ENCODE measurements at regions of chr11 and their contacts with region 1.

Region 1: GRCh38 chr11:10857709-10858438 is at the start of gene ZBED5:
- DNase-seq: peak; percentile 87 to 98
- ATAC-seq: peak; percentile 96
- H3K4me3 ChIP-seq: peak within 1 kb of the TSS; percentile 91
- H3K27ac ChIP-seq: peak within 1 kb of the TSS; percentile 95 to 98
- H3K4me1 ChIP-seq: peaks cover 36% of the 10 kb centered on the region
- CTCF ChIP-seq: no peak
- EP300 ChIP-seq: no peak
- POLR2A ChIP-seq: peak; percentile 76
- RAD21 ChIP-seq: peak; percentile 12; a peak in 1 of 5 replicates
- polyA plus RNA-seq, gene ZBED5: 132 and 142 TPM in 2 replicates

Region 2: GRCh38 chr11:10526974-10527918 is 330.6 kb before region 1 on chr11:
- CTCF ChIA-PET with region 1: no interaction called
- POLR2A ChIA-PET with region 1: no interaction called
- DNase-seq: peak in 1 of 2 experiments; percentile 42
- ATAC-seq: peak; percentile 86 to 92
- H3K4me3 ChIP-seq: peak overlapping the region; percentile 1; the same call in 1 of the 3 replicates
- H3K27ac ChIP-seq: peak overlapping the region; percentile 60 to 84
- H3K4me1 ChIP-seq: peaks cover 43% of the 10 kb centered on the region
- CTCF ChIP-seq: no peak
- EP300 ChIP-seq: no peak
- POLR2A ChIP-seq: no peak
- RAD21 ChIP-seq: no peak

Region 3: GRCh38 chr11:10818594-10818993 is 39.3 kb before region 1 on chr11:
- CTCF ChIA-PET with region 1: interaction called, 10 read pairs
- POLR2A ChIA-PET with region 1: interaction called, 3 read pairs
- DNase-seq: peak in 1 of 2 experiments; percentile 35
- ATAC-seq: peak; percentile 56 to 85; a peak in 4 of 6 replicates
- H3K4me3 ChIP-seq: no peak overlapping the region
- H3K27ac ChIP-seq: peak overlapping the region in 1 of 2 experiments; percentile 36; a peak in 1 of 6 replicates
- H3K4me1 ChIP-seq: peaks cover 11% of the 10 kb centered on the region; the same call in 2 of the 3 replicates
- CTCF ChIP-seq: no peak
- EP300 ChIP-seq: no peak
- POLR2A ChIP-seq: no peak
- RAD21 ChIP-seq: no peak

Region 4: DNA sequence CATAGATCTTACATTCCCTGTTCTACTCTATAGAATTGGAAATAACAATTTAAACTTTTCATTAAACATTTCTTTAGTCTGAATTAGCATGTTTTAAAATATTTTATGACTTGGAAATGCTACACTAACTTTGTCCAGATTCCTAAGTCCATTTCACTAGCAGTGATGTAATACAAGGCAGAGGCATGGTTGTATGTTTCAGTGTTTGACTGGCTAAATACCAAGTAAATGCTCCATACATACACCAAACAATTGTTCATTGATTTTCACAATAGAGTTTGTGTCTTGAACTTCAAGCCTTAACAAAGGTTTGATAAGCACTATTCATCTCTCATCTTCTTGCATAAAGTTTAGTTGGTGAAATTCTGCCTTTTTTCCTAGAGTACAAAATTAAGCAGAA is 13.5 kb before region 1 on chr11:
- CTCF ChIA-PET with region 1: interaction called, 3 read pairs
- POLR2A ChIA-PET with region 1: interaction called, 20 read pairs
- DNase-seq: no peak
- ATAC-seq: no peak
- H3K4me3 ChIP-seq: no peak overlapping the region
- H3K27ac ChIP-seq: no peak overlapping the region
- H3K4me1 ChIP-seq: no peaks in the 10 kb centered on the region
- CTCF ChIP-seq: no peak
- EP300 ChIP-seq: no peak
- POLR2A ChIP-seq: no peak
- RAD21 ChIP-seq: no peak

Region 5: GRCh38 chr11:10885703-10886363 is 28.0 kb after region 1 on chr11:
- CTCF ChIA-PET with region 1: no interaction called
- POLR2A ChIA-PET with region 1: interaction called, 16 read pairs
- DNase-seq: peak; percentile 18 to 91
- ATAC-seq: peak; percentile 90 to 92
- H3K4me3 ChIP-seq: no peak overlapping the region
- H3K27ac ChIP-seq: peak overlapping the region; percentile 79 to 90
- H3K4me1 ChIP-seq: peaks cover 47% of the 10 kb centered on the region
- CTCF ChIP-seq: no peak
- EP300 ChIP-seq: peak; percentile 64 to 89; a peak in 3 of 5 replicates
- POLR2A ChIP-seq: no peak
- RAD21 ChIP-seq: peak; percentile 21 to 23; a peak in 2 of 5 replicates

Region 6: DNA sequence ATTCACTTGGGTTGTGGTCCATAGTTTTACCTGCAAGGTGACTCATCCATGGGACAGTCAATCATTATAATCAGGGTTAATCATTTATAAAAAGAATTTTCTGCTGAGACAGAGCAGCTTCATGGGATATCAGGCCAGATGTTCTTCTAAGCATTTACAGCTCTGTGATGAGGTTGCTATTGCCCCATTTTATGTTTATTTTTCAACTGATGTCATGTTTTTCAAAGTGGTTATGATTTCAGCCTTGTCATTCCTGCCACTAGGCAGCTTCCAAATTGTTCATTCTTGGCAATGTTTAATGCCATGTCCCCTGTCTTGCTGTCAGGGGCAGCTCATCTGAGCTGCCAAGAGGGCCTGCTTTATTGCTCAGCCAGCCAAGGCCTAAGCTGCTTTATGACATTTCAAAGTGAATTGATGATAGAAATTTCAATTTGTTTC is 35.9 kb after region 1 on chr11:
- CTCF ChIA-PET with region 1: interaction called, 9 read pairs
- POLR2A ChIA-PET with region 1: interaction called, 58 read pairs
- DNase-seq: peak; percentile 18 to 90
- ATAC-seq: peak; percentile 90 to 95
- H3K4me3 ChIP-seq: no peak overlapping the region
- H3K27ac ChIP-seq: peak overlapping the region; percentile 76 to 93
- H3K4me1 ChIP-seq: peaks cover 53% of the 10 kb centered on the region
- CTCF ChIP-seq: no peak; the same call in 2 of the 3 replicates
- EP300 ChIP-seq: peak; percentile 76 to 88; a peak in 3 of 5 replicates
- POLR2A ChIP-seq: no peak
- RAD21 ChIP-seq: peak in 1 of 2 experiments; percentile 54; a peak in 2 of 5 replicates

Region 7: DNA sequence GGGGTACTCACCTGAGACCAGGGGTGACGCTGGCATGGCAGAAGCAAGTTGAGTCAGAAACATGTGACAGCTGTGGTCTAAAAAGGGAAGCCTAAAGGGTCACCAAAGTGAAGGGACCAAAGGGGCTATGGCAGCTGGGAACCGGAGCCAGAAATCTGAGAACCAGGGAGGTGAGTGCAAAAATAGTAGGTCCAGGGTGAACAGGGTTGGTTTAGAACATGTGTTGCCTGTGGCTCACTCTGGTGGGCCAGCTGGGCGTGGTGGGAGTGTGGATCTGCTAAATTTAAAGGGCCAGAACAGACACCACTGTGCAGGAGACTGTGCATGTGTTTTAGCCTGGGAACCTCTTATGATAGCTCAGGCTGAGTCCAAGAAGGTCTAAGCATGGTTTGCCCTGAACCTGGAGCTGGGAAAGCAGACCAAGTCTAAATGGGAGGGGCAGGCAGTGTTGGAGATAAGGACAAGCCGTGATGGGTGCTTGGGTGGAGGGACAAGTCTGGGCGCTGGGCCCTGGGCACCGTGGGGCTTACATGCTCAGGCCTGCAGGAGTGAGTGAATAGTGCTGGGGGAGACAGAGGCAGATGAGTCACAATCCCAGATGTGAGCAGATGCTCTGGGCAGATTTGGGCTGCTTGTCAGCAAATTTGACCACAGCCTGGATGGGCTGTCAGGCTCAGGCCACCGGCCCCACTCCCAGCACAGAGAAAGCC is 41.4 kb after region 1 on chr11:
- CTCF ChIA-PET with region 1: interaction called, 9 read pairs
- POLR2A ChIA-PET with region 1: interaction called, 58 read pairs
- DNase-seq: no peak
- ATAC-seq: peak; percentile 67 to 74
- H3K4me3 ChIP-seq: no peak overlapping the region
- H3K27ac ChIP-seq: peak overlapping the region; percentile 87 to 93
- H3K4me1 ChIP-seq: peaks cover 62% of the 10 kb centered on the region
- CTCF ChIP-seq: no peak
- EP300 ChIP-seq: no peak
- POLR2A ChIP-seq: no peak
- RAD21 ChIP-seq: peak in 1 of 2 experiments; percentile 12; a peak in 3 of 5 replicates

Measured in A549 (cell line).